Activated CD4-positive, alpha-beta T cell treated with anti-CD3 and anti-CD28 coated beads for 36 hours (primary cell): ENCODE measurements at regions of chr15 and their contacts with region 1.

Region 1: GRCh38 chr15:44426975-44427755 is at the start of gene CTDSPL2:
- DNase-seq: peak; percentile 97
- ATAC-seq: peak; percentile 98
- H3K4me3 Mint-ChIP-seq: peak within 1 kb of the TSS; percentile 98
- H3K27ac Mint-ChIP-seq: peak within 1 kb of the TSS; percentile 99
- H3K4me1 Mint-ChIP-seq: peaks cover 36% of the 10 kb centered on the region
- H3K27me3 Mint-ChIP-seq: no peaks in the 10 kb centered on the region
- total RNA-seq, gene CTDSPL2: 80.7 to 107 TPM

Region 2: DNA sequence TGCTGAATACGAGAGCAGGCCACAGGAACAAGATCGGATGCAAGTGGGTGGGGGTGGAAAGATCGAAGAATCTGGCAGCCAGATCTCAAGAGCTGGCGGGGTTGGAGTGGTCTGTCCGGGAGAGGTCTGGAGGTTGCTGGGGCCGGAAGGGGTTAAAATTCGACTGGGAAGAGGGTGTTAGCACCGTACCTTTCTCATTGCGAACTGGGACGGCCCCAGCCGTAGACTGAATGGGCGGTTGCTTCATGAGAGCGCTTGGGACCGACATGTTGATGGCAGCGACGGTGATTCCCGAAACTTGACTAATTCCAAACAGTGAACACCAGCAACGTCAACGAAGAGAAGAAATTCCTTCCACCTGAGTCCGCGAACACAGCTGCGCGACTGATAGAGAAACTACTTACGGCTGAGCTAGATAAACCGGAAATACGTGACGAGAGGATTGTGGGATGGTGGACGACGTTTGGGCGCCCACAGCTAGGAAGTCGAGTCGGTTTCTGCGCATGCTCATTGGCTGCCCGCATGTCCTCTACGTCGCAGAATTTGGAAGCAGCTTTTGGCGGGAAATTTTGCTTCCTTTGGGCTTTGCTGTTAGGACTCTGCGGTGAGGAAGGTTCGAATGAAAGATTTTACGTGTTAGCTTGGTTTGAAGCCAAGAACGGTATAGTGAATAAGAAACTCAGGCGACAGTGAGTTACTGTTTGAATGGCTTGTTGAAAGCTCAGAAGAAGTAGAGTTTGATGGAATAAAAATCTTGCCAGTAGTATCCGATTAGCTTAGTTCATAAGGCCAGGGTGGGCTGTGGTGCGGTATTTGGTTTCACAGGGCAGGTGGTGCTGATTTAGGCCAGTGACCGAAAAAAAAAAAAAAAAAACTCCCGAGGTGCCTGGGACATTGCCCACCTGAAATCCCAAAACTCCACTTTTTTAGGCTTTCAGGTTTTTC is 602.6 kb before region 1 on chr15 and contains the start of gene MFAP1:
- CTCF ChIA-PET with region 1: no interaction called
- POLR2A ChIA-PET with region 1: no interaction called
- intact Hi-C with region 1: loop called in 1 of 2 experiments (anchors 2 kb)
- DNase-seq: peak; percentile 95
- ATAC-seq: peak; percentile 85
- H3K4me3 Mint-ChIP-seq: peak within 1 kb of the TSS; percentile 100
- H3K27ac Mint-ChIP-seq: peak within 1 kb of the TSS; percentile 99
- H3K4me1 Mint-ChIP-seq: peaks cover 53% of the 10 kb centered on the region
- H3K27me3 Mint-ChIP-seq: no peaks in the 10 kb centered on the region
- total RNA-seq, gene MFAP1: 51.3 to 56.2 TPM

Region 3: GRCh38 chr15:44181410-44181809 is 245.8 kb before region 1 on chr15:
- CTCF ChIA-PET with region 1: no interaction called
- POLR2A ChIA-PET with region 1: no interaction called
- intact Hi-C with region 1: no loop called
- DNase-seq: no peak
- ATAC-seq: no peak
- H3K4me3 Mint-ChIP-seq: no peak overlapping the region
- H3K27ac Mint-ChIP-seq: no peak overlapping the region
- H3K4me1 Mint-ChIP-seq: no peaks in the 10 kb centered on the region
- H3K27me3 Mint-ChIP-seq: peaks cover 4% of the 10 kb centered on the region

Region 4: GRCh38 chr15:44447772-44448376 is 20.7 kb after region 1 on chr15:
- CTCF ChIA-PET with region 1: interaction called, 4 read pairs
- POLR2A ChIA-PET with region 1: interaction called, 5 read pairs
- intact Hi-C with region 1: loop called in 1 of 2 experiments (anchors 2 kb)
- DNase-seq: no peak
- ATAC-seq: no peak
- H3K4me3 Mint-ChIP-seq: no peak overlapping the region
- H3K27ac Mint-ChIP-seq: no peak overlapping the region
- H3K4me1 Mint-ChIP-seq: peaks cover 42% of the 10 kb centered on the region
- H3K27me3 Mint-ChIP-seq: no peaks in the 10 kb centered on the region

Region 5: GRCh38 chr15:44536962-44537734 is 110.0 kb after region 1 on chr15 and contains the start of gene EIF3J:
- CTCF ChIA-PET with region 1: interaction called, 5 read pairs
- POLR2A ChIA-PET with region 1: interaction called, 12 read pairs
- intact Hi-C with region 1: loop called (anchors 1 kb)
- DNase-seq: peak; percentile 97
- ATAC-seq: peak; percentile 95
- H3K4me3 Mint-ChIP-seq: peak within 1 kb of the TSS; percentile 75
- H3K27ac Mint-ChIP-seq: peak within 1 kb of the TSS; percentile 95
- H3K4me1 Mint-ChIP-seq: peaks cover 45% of the 10 kb centered on the region
- H3K27me3 Mint-ChIP-seq: no peaks in the 10 kb centered on the region
- total RNA-seq, gene EIF3J: 106 to 143 TPM

Region 6: GRCh38 chr15:44711356-44712107 is 284.4 kb after region 1 on chr15 and contains the start of gene B2M:
- CTCF ChIA-PET with region 1: interaction called, 3 read pairs
- POLR2A ChIA-PET with region 1: interaction called, 4 read pairs
- intact Hi-C with region 1: loop called in 1 of 2 experiments (anchors 1 kb)
- DNase-seq: peak; percentile 97
- ATAC-seq: peak; percentile 78
- H3K4me3 Mint-ChIP-seq: peak within 1 kb of the TSS; percentile 96
- H3K27ac Mint-ChIP-seq: peak within 1 kb of the TSS; percentile 100
- H3K4me1 Mint-ChIP-seq: peaks cover 34% of the 10 kb centered on the region
- H3K27me3 Mint-ChIP-seq: no peaks in the 10 kb centered on the region
- total RNA-seq, gene B2M: 5,181 to 7,416 TPM